ENCODE measurements at regions of chr12 and their contacts with region 1.

Region 1: DNA sequence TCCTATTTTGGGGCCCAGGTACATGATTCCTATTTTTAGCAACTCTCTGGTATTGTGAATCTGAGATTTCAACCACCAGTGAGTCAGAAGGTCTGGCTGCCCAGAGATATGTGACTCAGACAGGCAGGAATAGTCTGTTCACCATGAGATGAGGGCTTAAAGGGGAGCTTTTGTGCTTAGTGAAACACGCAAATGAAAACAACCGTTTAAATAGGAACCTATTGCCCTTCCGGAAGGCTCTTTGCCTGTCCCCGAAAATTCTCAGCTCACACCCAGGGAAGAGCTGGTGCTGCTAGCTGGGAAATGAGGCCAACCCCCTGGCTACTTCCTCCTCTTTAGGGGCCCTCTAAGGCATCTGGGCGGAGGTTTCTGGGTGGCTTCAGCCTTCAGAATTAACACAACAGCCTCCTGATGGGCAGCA is 283.6 kb downstream of the CACNA1C start:
- DNase-seq: peak; percentile 91
- H3K4me3 ChIP-seq: no peak overlapping the region
- H3K27me3 ChIP-seq: no peaks in the 10 kb centered on the region
- CTCF ChIP-seq: no peak

Region 2: DNA sequence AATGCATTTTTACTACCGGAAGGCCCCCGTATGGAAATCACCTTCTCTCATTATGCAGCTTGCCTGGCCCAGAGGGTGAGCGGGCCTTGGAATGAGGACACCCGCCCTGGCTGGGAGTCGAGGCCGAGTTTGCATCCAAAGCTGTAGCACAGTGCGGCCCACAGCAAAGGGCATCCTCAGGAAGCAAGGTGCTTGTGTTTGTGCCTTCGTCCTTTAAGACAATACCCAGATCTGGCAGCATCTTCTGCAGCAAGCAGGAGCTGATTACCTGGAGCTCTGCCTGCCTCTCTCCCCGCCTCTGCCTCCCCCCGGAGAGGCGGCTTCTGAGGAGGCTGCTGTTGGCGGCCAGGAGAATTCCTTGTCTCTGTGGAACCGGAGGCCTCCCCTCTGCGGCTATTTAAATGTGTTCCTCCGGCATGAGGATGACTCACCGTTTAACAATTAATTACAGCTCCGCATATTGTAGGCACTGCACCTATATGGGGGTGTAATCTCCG is 138.4 kb before region 1 on chr12:
- CTCF ChIA-PET with region 1: no interaction called
- POLR2A ChIA-PET with region 1: no interaction called
- DNase-seq: peak; percentile 41
- H3K4me3 ChIP-seq: no peak overlapping the region
- H3K27me3 ChIP-seq: no peaks in the 10 kb centered on the region
- CTCF ChIP-seq: no peak

Region 3: GRCh38 chr12:2360629-2361168 is 24.3 kb after region 1 on chr12:
- CTCF ChIA-PET with region 1: no interaction called
- POLR2A ChIA-PET with region 1: interaction called, 15 read pairs
- DNase-seq: no peak
- H3K4me3 ChIP-seq: no peak overlapping the region
- H3K27me3 ChIP-seq: no peaks in the 10 kb centered on the region
- CTCF ChIP-seq: no peak; the same call in 1 of the 2 replicates

Measured in BJ (cell line).